WTC11 (cell line): ENCODE measurements at regions of chr22 and their contacts with region 1.

Region 1: DNA sequence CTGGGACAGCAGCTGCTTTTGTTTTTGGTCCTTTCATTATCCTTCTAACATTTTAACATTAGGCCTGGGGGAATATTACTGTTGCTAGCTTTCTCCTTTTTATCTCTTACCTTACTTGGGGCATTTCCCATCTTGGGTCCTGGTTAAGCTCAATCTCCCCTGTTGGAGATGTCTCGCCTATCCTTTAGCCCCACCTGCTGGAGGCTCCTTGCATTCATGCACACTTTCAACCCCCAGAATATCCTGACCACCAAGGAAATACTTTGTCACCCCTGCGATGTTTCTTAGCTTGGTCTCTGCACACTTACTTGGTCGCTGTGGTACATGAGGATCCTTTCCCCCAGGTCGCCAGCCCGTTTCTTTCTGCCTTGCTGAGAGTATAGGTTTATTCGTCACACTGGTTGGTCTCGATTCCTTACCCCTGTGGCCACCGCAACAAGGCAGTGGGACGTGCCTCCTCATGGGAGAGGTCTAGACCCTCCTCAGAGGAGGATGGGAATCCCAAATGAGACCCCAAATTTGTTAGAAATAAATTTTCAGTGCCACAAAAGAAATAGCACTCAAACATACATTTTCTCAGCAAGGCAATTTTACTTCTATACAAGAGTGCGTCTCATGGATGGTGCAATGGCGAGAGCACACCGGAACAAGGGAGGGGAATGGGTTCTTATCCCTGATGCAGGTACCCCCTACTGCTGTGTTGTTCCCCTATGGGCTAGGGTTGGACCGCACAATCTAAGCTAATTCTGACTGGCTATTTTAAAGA is 5.4 kb upstream of the TXN2 start:
- DNase-seq: peak; percentile 77
- ATAC-seq: peak; percentile 57
- H3K4me3 Mint-ChIP-seq: no peak overlapping the region; the same call in 1 of the 2 replicates
- H3K27ac Mint-ChIP-seq: no peak overlapping the region
- H3K4me1 Mint-ChIP-seq: no peaks in the 10 kb centered on the region
- H3K27me3 Mint-ChIP-seq: peaks cover 41% of the 10 kb centered on the region
- CTCF ChIP-seq: peak; percentile 42; the same call in 1 of the 2 replicates

Region 2: DNA sequence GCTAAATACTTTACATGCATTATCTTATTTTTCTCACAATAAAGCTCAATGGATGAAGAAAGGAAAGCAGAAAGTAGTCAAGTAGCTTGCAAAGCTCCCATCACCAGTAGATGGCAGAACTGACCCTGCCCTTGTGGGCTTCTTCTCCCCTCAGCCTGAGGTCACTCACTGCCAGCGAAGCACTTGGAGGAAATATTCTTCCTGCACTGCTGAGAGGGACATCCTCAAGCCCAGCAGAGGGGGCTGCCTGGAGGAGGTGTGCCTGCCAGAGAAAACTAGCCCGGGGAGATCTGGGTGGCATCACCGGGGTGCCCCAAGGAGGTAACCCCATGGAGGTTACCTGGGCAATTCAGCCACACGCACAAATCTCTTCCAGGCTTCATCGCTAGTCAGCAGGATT is 291.8 kb before region 1 on chr22:
- CTCF ChIA-PET with region 1: interaction called, 11 read pairs
- POLR2A ChIA-PET with region 1: no interaction called
- DNase-seq: peak; percentile 73
- ATAC-seq: peak; percentile 86
- H3K4me3 Mint-ChIP-seq: no peak overlapping the region
- H3K27ac Mint-ChIP-seq: no peak overlapping the region
- H3K4me1 Mint-ChIP-seq: peaks cover 46% of the 10 kb centered on the region
- H3K27me3 Mint-ChIP-seq: peaks cover 4% of the 10 kb centered on the region
- CTCF ChIP-seq: peak; percentile 31

Region 3: GRCh38 chr22:36277482-36278291 is 209.1 kb before region 1 on chr22:
- CTCF ChIA-PET with region 1: interaction called, 25 read pairs
- POLR2A ChIA-PET with region 1: no interaction called
- DNase-seq: peak; percentile 74
- ATAC-seq: peak; percentile 94
- H3K4me3 Mint-ChIP-seq: no peak overlapping the region; the same call in 1 of the 2 replicates
- H3K27ac Mint-ChIP-seq: peak overlapping the region; percentile 72
- H3K4me1 Mint-ChIP-seq: peaks cover 11% of the 10 kb centered on the region
- H3K27me3 Mint-ChIP-seq: no peaks in the 10 kb centered on the region
- CTCF ChIP-seq: peak; percentile 75

Region 4: DNA sequence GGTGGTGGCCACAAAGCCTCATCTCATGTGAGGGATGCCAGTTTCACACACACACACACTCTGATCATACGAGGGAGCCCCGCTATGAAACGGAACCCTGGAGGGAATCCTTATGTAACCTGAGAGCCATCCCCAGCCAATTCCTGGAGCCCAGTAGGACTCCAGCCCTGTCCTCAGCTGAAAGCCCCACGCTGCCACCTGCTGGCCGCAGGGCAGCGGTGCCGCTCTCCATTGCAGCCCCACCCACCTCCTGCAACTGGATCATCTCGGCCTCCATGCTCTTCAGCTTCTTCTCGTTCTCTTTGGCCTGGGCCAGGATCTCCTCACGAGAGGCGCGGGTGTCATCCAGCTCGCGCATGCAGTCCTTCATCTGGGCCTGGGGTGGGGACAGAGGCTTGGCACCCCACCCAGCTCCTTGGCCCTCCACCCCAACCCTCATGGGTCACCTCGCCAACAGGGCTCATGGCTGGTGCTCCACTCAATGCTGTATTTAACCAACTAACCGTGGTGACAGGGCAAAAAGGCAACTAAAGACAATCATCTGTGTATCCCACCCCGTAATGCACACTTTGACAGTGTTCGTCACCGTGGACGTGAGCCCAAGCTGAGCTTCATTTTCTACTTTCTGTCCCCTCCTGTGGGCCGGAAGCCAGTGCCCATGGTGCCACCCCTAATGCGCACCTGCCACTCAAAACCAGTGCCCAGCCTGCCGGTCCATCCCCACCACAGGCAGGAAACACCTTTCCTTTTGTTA is 200.2 kb before region 1 on chr22:
- CTCF ChIA-PET with region 1: interaction called, 16 read pairs
- POLR2A ChIA-PET with region 1: interaction called, 3 read pairs
- DNase-seq: peak; percentile 87
- ATAC-seq: peak; percentile 94
- H3K4me3 Mint-ChIP-seq: no peak overlapping the region
- H3K27ac Mint-ChIP-seq: 0 out of 2 replicates have a peak overlapping the region, but pooled peaks have one; percentile 15
- H3K4me1 Mint-ChIP-seq: peaks cover 5% of the 10 kb centered on the region; the same call in 1 of the 2 replicates
- H3K27me3 Mint-ChIP-seq: no peaks in the 10 kb centered on the region
- CTCF ChIP-seq: peak; percentile 85

Region 5: GRCh38 chr22:36331306-36331911 is 155.4 kb before region 1 on chr22:
- CTCF ChIA-PET with region 1: interaction called, 10 read pairs
- POLR2A ChIA-PET with region 1: no interaction called
- DNase-seq: peak; percentile 54
- ATAC-seq: peak; percentile 32
- H3K4me3 Mint-ChIP-seq: no peak overlapping the region
- H3K27ac Mint-ChIP-seq: peak overlapping the region; percentile 100
- H3K4me1 Mint-ChIP-seq: peaks cover 81% of the 10 kb centered on the region
- H3K27me3 Mint-ChIP-seq: no peaks in the 10 kb centered on the region
- CTCF ChIP-seq: no peak

Region 6: DNA sequence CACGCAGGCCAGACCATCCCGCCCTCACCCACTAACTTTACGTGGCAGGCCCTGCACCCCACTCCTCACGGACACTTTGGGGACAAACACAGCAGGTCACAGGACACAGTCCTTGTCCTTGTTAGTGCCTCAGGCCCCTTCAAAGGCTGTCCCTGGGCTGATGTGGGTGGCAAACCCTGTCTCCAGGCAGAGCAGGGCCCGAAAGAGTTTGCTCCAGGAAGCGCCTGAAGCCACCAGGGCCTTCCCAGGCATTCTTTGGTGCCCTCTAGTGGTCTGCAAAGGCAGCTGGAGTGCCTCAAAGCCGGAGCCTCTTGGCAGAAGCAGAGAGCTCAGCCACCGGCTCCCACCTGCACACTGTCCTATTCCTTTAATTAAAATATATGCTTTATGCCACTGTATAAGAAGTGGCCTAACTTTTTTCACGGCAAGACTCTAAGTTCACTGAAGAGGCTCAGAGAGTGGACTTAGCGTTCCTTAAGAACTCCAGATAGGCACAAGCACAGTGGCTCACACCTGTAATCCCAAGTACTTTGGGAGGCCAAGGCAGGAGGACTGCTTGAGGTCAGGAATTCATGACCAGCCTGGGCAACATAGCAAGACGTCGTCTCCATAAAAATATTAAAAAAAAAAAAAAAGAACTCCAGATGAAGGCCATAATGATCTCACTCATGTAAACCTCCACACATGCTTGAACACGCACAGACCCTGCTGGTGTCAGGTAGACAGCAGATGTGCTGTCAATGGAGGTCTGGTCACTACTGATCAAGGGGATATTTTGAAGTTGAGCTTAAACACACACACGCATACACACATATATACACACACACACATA is 16.4 kb before region 1 on chr22:
- CTCF ChIA-PET with region 1: interaction called, 38 read pairs
- POLR2A ChIA-PET with region 1: no interaction called
- DNase-seq: peak; percentile 86
- ATAC-seq: peak; percentile 95
- H3K4me3 Mint-ChIP-seq: no peak overlapping the region
- H3K27ac Mint-ChIP-seq: peak overlapping the region; percentile 87
- H3K4me1 Mint-ChIP-seq: 0 out of 2 replicates have a peak, but pooled peaks cover 3% of the 10 kb centered on the region
- H3K27me3 Mint-ChIP-seq: no peaks in the 10 kb centered on the region
- CTCF ChIP-seq: peak; percentile 93

Region 7: GRCh38 chr22:36520423-36520822 is 33.6 kb after region 1 on chr22:
- CTCF ChIA-PET with region 1: no interaction called
- POLR2A ChIA-PET with region 1: no interaction called
- DNase-seq: no peak
- ATAC-seq: no peak
- H3K4me3 Mint-ChIP-seq: no peak overlapping the region
- H3K27ac Mint-ChIP-seq: no peak overlapping the region
- H3K4me1 Mint-ChIP-seq: no peaks in the 10 kb centered on the region
- H3K27me3 Mint-ChIP-seq: no peaks in the 10 kb centered on the region
- CTCF ChIP-seq: no peak

Region 8: GRCh38 chr22:36546092-36546804 is 59.4 kb after region 1 on chr22:
- CTCF ChIA-PET with region 1: no interaction called
- POLR2A ChIA-PET with region 1: no interaction called
- DNase-seq: peak; percentile 79
- ATAC-seq: peak; percentile 84
- H3K4me3 Mint-ChIP-seq: peak overlapping the region; percentile 44
- H3K27ac Mint-ChIP-seq: no peak overlapping the region
- H3K4me1 Mint-ChIP-seq: peaks cover 24% of the 10 kb centered on the region
- H3K27me3 Mint-ChIP-seq: peaks cover 14% of the 10 kb centered on the region
- CTCF ChIP-seq: peak; percentile 72